H1 (cell line): ENCODE measurements at regions of chr3 and their contacts with region 1.

Region 1: DNA sequence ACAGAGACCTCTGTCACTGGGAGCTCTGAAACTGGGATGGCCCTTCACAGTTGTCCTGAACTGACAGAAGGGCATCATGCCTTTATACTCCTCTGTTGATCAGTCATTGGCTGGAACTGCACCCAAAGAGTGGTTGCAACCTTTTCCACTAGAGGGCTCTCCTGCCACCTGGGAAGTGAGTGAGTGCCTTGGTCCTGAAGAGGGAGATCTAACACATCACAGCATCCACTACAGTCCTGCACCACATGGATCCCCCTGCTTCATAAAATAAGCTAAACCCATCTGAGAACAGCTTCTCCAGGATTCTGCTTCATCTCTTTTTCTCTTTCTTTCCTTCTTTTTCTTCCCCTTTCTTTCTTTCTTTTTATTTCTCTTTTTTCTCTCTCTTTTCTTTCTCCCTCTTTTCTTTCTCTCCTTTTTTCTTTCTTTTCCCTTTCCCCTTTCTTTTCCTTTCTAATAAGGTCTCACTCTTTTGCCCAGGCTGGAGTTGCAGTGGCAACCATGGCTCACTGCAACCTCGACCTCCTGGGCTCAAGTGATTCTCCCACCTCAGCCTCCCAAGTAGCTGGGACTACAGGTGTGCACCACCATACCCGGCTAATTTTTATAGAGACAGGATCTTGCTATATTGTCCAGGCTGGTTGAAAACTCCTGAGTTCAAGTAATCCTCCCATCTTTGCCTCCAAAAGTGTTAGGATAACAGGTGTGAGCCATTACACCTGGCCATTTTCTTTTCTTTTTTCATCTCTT is 42.8 kb upstream of the RAF1 start:
- DNase-seq: peak; percentile 53 to 77
- H3K4me3 ChIP-seq: no peak overlapping the region
- H3K27ac ChIP-seq: no peak overlapping the region
- H3K4me1 ChIP-seq: peaks cover 0 to 4% (median 0%) of the 10 kb centered on the region in 4 experiments; a peak in 2 of 7 replicates
- H3K27me3 ChIP-seq: no peaks in the 10 kb centered on the region
- CTCF ChIP-seq: peak; percentile 87 to 99 (median 99)
- EP300 ChIP-seq: no peak
- POLR2A ChIP-seq: no peak
- RAD21 ChIP-seq: peak; percentile 85 to 90

Region 2: DNA sequence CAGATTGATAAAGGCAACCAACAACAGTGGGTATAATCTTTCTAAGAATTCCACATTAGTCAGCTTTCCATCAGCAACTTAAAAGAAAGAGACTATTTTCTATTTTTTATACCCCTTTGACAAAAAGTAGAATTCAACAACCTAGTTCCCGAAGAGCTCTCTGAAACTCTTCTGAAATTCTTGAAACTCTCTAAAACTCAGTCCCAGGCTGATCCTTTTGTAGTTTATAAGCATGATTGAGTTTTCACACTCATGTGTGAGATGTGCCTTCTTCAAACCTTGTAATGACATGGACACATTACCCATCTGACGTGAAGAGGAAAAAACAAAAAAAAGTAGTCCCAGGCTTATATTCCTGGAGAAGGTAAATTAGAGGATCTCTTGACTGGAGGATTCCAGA is 74.2 kb before region 1 on chr3:
- CTCF ChIA-PET with region 1: no interaction called
- POLR2A ChIA-PET with region 1: no interaction called
- DNase-seq: no peak
- H3K4me3 ChIP-seq: no peak overlapping the region
- H3K27ac ChIP-seq: no peak overlapping the region
- H3K4me1 ChIP-seq: peaks cover 0 to 6% (median 2%) of the 10 kb centered on the region in 4 experiments; a peak in 5 of 7 replicates
- H3K27me3 ChIP-seq: no peaks in the 10 kb centered on the region
- CTCF ChIP-seq: no peak
- EP300 ChIP-seq: no peak
- POLR2A ChIP-seq: no peak
- RAD21 ChIP-seq: no peak

Region 3: DNA sequence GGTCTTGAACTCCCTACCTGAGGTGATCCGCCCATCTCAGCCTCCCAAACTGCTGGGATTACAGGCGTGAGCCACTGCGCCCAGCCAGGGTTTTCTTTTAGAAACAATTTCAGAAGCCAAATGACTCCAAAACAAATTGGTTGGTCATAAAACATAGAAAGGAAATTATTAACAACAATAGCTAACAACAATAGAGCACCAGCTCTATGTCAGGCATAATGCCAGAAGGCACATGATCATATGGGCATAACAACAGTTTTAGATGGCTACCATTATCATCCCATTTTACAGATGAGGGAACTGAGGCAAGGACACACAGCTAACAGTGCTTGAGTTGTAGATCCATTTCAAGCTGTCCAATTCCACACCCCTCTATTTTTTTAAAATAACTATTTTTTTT is 20.6 kb before region 1 on chr3:
- CTCF ChIA-PET with region 1: interaction called, 14 read pairs
- POLR2A ChIA-PET with region 1: no interaction called
- DNase-seq: no peak
- H3K4me3 ChIP-seq: no peak overlapping the region
- H3K27ac ChIP-seq: no peak overlapping the region
- H3K4me1 ChIP-seq: no peaks in the 10 kb centered on the region
- H3K27me3 ChIP-seq: no peaks in the 10 kb centered on the region
- CTCF ChIP-seq: no peak
- EP300 ChIP-seq: no peak
- POLR2A ChIP-seq: no peak
- RAD21 ChIP-seq: no peak

Region 4: GRCh38 chr3:12758025-12758830 is 51.5 kb after region 1 on chr3:
- CTCF ChIA-PET with region 1: interaction called, 12 read pairs
- POLR2A ChIA-PET with region 1: interaction called, 3 read pairs
- DNase-seq: no peak
- H3K4me3 ChIP-seq: no peak overlapping the region
- H3K27ac ChIP-seq: no peak overlapping the region
- H3K4me1 ChIP-seq: peaks cover 0 to 13% (median 8%) of the 10 kb centered on the region in 4 experiments; a peak in 5 of 7 replicates
- H3K27me3 ChIP-seq: no peaks in the 10 kb centered on the region
- CTCF ChIP-seq: no peak
- EP300 ChIP-seq: no peak
- POLR2A ChIP-seq: no peak
- RAD21 ChIP-seq: no peak

Region 5: DNA sequence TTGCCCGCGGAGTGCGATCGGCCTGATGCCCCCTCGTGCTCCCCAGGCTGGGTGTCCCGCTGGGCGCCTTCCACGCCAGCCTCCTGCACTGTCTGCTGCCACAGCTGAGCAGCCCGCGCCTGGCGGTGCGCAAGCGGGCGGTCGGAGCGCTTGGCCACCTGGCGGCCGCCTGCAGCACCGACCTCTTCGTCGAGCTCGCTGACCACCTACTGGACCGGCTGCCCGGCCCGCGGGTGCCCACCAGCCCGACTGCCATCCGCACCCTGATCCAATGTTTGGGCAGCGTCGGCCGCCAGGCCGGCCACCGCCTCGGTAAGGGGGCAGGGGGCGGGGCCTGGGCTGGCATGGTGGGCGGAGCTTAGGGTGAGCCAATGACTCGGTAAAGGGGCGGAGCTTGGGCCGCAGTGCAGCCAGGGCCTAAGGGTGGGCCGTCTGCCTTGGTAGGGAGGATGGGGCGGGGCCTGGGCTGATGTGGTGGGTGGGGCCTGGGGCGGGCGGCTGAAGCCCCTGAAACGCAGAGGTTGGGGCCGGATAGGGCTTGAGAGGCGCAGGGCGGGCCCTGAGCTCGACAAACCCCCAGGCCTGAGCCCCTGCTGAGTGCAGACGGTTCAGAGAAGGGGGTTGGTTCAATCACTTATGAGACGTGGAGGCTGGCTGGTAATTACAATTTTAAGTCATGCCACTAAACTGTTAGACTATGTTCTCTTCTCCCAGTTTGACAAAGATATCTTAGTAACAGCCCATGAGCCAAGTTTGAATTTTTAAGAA is 103.5 kb after region 1 on chr3:
- CTCF ChIA-PET with region 1: interaction called, 23 read pairs
- POLR2A ChIA-PET with region 1: no interaction called
- DNase-seq: peak; percentile 90 to 99
- H3K4me3 ChIP-seq: peak overlapping the region; percentile 38 to 64 (median 60)
- H3K27ac ChIP-seq: no peak overlapping the region
- H3K4me1 ChIP-seq: peaks cover 0 to 8% (median 4%) of the 10 kb centered on the region in 4 experiments; a peak in 4 of 7 replicates
- H3K27me3 ChIP-seq: no peaks in the 10 kb centered on the region
- CTCF ChIP-seq: peak in 2 of 3 experiments; percentile 60 to 70; a peak in 3 of 4 replicates
- EP300 ChIP-seq: no peak
- POLR2A ChIP-seq: peak in 1 of 2 experiments; percentile 55; a peak in 1 of 3 replicates
- RAD21 ChIP-seq: peak; percentile 38 to 47; a peak in 3 of 4 replicates

Region 6: GRCh38 chr3:12891985-12892839 is 185.5 kb after region 1 on chr3:
- CTCF ChIA-PET with region 1: interaction called, 14 read pairs
- POLR2A ChIA-PET with region 1: no interaction called
- DNase-seq: peak in 1 of 2 experiments; percentile 70
- H3K4me3 ChIP-seq: no peak overlapping the region
- H3K27ac ChIP-seq: no peak overlapping the region
- H3K4me1 ChIP-seq: peaks cover 0 to 2% (median 0%) of the 10 kb centered on the region in 4 experiments; a peak in 2 of 7 replicates
- H3K27me3 ChIP-seq: peaks cover 0 to 9% (median 1%) of the 10 kb centered on the region in 4 experiments; a peak in 4 of 7 replicates
- CTCF ChIP-seq: peak; percentile 32 to 92 (median 89)
- EP300 ChIP-seq: no peak
- POLR2A ChIP-seq: no peak
- RAD21 ChIP-seq: peak; percentile 98 to 99